CD8-positive, alpha-beta T cell (primary cell): ENCODE measurements at regions of chr10 and their contacts with region 1.

Region 1: DNA sequence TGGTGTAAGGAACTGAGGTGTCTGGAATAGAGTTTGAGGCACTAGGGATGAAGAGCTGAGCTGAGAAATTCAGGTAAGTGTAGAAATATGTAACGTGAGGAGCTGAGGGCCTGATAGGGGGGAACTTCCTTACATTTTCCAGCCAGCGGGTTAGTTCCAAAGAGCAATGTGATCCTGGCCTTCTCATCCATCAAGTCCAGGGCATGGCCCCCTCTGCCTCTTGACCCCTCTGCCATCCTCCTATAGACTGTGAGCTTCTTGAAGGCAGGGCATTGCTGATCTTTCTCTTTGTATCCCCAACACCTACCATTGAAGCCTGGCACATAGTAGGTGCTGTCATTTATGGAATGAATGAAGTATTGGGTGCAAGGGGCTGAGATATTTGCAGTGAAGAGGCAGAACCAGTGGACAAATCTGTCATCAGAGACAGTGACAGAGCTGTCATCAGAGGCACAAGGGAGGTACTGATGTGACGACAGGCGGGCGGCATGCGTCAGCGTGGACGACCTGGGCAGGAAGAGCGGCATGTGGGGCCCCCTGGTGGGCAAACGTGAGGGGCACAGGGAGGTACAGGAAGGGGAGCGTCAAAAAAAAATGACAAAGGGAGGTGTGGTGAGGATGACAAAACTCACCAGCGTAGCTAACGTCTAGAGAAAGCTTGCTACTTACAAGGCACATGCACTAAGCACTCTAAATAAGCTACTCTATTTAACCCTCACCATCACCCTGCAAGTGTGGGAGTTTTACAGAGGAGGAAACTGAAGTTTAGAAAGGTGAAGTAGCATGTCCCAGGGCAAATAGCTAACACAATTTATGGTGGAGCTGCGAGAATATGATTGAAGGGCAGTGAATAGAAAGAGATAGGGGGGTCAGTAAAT is 5.2 kb upstream of the CAMK2G start:
- DNase-seq: peak; percentile 86 to 98 (median 95)
- ATAC-seq: peak; percentile 85
- H3K4me3 ChIP-seq: no peak overlapping the region
- H3K4me3 Mint-ChIP-seq: no peak overlapping the region
- H3K27ac ChIP-seq: peak overlapping the region; percentile 19 to 29
- H3K27ac Mint-ChIP-seq: peak overlapping the region; percentile 90
- H3K4me1 ChIP-seq: peaks cover 31% of the 10 kb centered on the region
- H3K4me1 Mint-ChIP-seq: peaks cover 42% of the 10 kb centered on the region
- H3K27me3 ChIP-seq: no peaks in the 10 kb centered on the region
- H3K27me3 Mint-ChIP-seq: no peaks in the 10 kb centered on the region
- CTCF ChIP-seq: peak; percentile 85

Region 2: DNA sequence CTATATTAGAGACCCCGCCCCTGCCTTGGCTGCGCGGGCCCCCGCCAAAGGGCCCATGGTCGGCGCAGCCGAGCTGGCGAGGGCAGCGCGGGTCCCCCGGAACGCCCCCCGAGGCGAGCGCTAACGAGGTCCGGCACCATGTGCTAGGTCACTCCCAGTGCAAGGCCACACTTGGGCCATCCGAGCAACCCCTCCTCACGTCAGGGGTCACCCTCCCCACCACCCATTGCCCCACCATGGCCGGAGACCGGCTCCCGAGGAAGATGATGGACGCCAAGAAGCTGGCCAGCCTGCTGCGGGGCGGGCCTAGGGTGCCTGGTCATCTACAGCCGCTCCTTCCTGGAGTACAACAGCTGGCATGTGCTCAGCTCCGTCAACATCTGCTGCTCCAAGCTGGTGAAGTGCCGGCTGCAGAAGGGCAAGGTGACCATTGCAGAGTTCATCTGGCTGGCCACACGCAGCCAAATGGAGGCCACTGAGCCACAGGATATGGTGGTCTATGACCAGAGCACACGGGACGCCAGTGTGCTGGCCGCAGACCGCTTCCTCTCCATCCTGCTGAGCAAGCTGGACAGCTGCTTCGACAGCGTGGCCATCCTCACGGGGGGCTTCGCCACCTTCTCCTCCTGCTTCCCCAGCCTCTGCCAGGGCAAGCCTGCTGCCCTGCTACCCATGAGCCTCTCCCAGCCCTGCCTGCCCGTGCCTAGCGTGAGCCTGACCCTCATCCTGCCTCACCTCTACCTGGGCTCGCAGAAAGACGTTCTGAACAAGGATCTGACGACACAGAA is 147.8 kb before region 1 on chr10:
- CTCF ChIA-PET with region 1: no interaction called
- POLR2A ChIA-PET with region 1: no interaction called
- intact Hi-C with region 1: no loop called
- DNase-seq: no peak
- ATAC-seq: no peak
- H3K4me3 ChIP-seq: no peak overlapping the region
- H3K4me3 Mint-ChIP-seq: peak overlapping the region; percentile 58
- H3K27ac ChIP-seq: no peak overlapping the region
- H3K27ac Mint-ChIP-seq: no peak overlapping the region
- H3K4me1 ChIP-seq: peaks cover 13% of the 10 kb centered on the region
- H3K4me1 Mint-ChIP-seq: peaks cover 30% of the 10 kb centered on the region
- H3K27me3 ChIP-seq: no peaks in the 10 kb centered on the region
- H3K27me3 Mint-ChIP-seq: no peaks in the 10 kb centered on the region
- CTCF ChIP-seq: no peak

Region 3: GRCh38 chr10:73772280-73773151 is 107.0 kb before region 1 on chr10:
- CTCF ChIA-PET with region 1: interaction called, 12 read pairs
- POLR2A ChIA-PET with region 1: interaction called, 4 read pairs
- intact Hi-C with region 1: loop called (anchors 1 to 5 kb)
- DNase-seq: peak; percentile 52 to 95 (median 78)
- ATAC-seq: peak; percentile 66
- H3K4me3 ChIP-seq: peak overlapping the region; percentile 92 to 96
- H3K4me3 Mint-ChIP-seq: peak overlapping the region; percentile 96
- H3K27ac ChIP-seq: peak overlapping the region; percentile 86 to 94
- H3K27ac Mint-ChIP-seq: peak overlapping the region; percentile 96
- H3K4me1 ChIP-seq: peaks cover 37% of the 10 kb centered on the region
- H3K4me1 Mint-ChIP-seq: peaks cover 59% of the 10 kb centered on the region
- H3K27me3 ChIP-seq: no peaks in the 10 kb centered on the region
- H3K27me3 Mint-ChIP-seq: no peaks in the 10 kb centered on the region
- CTCF ChIP-seq: no peak

Region 4: DNA sequence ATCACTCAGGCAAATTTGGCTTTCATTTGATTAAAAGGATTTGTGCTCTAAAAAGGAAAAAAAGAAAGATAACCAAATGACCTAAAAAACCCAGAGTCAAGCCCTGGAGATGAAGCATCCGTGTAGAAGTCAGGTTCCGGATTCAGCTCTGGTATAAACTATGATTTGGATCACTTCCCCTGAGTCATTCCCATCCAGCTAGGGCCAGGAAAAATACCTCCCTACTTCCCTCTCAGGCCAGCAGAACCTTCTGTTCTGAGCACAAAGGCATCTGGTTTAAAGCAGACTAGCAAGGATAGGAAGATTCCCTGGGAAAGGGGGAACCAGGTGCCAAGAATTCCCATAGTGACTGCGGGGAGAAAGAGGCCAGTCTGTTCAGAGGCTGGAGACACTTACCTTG is 42.5 kb before region 1 on chr10:
- CTCF ChIA-PET with region 1: interaction called, 13 read pairs
- POLR2A ChIA-PET with region 1: interaction called, 3 read pairs
- intact Hi-C with region 1: no loop called
- DNase-seq: no peak
- ATAC-seq: no peak
- H3K4me3 ChIP-seq: no peak overlapping the region
- H3K4me3 Mint-ChIP-seq: no peak overlapping the region
- H3K27ac ChIP-seq: no peak overlapping the region
- H3K27ac Mint-ChIP-seq: no peak overlapping the region
- H3K4me1 ChIP-seq: no peaks in the 10 kb centered on the region
- H3K4me1 Mint-ChIP-seq: peaks cover 2% of the 10 kb centered on the region
- H3K27me3 ChIP-seq: no peaks in the 10 kb centered on the region
- H3K27me3 Mint-ChIP-seq: no peaks in the 10 kb centered on the region
- CTCF ChIP-seq: no peak

Region 5: DNA sequence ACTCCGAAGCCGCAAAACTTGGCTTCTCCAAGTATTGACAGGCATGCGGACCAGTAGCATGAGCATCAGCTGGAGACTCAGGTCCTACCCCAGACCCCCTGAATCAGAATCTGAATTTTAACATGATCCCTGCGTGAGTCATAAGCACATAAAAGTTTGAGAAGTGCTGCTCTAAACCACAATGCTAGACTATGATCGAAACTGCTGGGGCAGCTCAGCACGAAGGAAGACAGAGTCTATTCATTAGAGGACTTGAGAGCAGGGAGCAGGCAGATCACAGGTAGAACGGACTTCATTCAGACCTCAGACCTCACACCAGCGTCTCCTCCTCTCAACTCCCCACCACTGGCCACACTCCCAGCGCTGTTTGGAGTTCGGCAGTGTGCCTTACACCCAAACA is 22.1 kb before region 1 on chr10:
- CTCF ChIA-PET with region 1: interaction called, 528 read pairs
- POLR2A ChIA-PET with region 1: interaction called, 19 read pairs
- intact Hi-C with region 1: no loop called
- DNase-seq: peak in 4 of 9 experiments; percentile 31 to 60 (median 48)
- ATAC-seq: peak; percentile 53
- H3K4me3 ChIP-seq: no peak overlapping the region
- H3K4me3 Mint-ChIP-seq: peak overlapping the region; percentile 50
- H3K27ac ChIP-seq: no peak overlapping the region
- H3K27ac Mint-ChIP-seq: peak overlapping the region; percentile 81
- H3K4me1 ChIP-seq: peaks cover 62% of the 10 kb centered on the region
- H3K4me1 Mint-ChIP-seq: peaks cover 60% of the 10 kb centered on the region
- H3K27me3 ChIP-seq: no peaks in the 10 kb centered on the region
- H3K27me3 Mint-ChIP-seq: no peaks in the 10 kb centered on the region
- CTCF ChIP-seq: no peak

Region 6: DNA sequence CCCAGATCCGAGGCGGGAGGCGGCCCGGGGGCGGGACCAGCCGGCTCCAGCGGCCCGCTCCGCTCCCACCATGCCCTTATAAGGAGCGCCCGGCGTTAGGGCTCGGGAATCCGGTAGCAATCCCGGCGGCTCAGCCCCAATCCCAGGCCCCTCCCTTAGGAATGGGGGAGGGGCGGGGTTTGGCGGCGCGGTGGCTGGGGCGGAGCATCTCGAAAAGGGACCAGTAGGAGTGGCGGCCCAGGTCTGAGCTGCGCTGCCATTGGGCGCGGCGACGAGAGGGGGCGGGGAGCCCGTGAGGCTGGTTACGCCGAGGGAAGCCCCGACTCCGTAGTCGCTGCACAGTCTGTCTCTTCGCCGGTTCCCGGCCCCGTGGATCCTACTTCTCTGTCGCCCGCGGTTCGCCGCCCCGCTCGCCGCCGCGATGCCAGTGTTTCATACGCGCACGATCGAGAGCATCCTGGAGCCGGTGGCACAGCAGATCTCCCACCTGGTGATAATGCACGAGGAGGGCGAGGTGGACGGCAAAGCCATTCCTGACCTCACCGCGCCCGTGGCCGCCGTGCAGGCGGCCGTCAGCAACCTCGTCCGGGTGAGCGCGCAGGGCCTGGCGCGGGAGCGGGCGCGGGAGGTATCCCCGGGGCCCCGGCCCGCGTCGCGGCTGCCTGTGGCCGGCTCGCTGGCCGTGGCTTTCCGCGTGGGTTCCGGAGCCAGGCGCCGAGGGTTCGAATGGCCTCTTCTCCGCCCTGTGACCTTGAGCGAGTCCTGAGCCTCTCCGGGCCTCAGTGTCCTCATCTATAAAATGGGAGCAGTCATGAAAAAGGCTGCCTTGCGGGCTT is 118.5 kb after region 1 on chr10 and contains the start of gene VCL:
- CTCF ChIA-PET with region 1: interaction called, 6 read pairs
- POLR2A ChIA-PET with region 1: interaction called, 3 read pairs
- intact Hi-C with region 1: loop called (anchors 2 kb)
- DNase-seq: peak; percentile 91 to 97 (median 95)
- ATAC-seq: peak; percentile 96
- H3K4me3 ChIP-seq: peak within 1 kb of the TSS; percentile 82
- H3K4me3 Mint-ChIP-seq: peak within 1 kb of the TSS; percentile 100
- H3K27ac ChIP-seq: peak within 1 kb of the TSS; percentile 63
- H3K27ac Mint-ChIP-seq: peak within 1 kb of the TSS; percentile 96
- H3K4me1 ChIP-seq: peaks cover 32% of the 10 kb centered on the region
- H3K4me1 Mint-ChIP-seq: peaks cover 45% of the 10 kb centered on the region
- H3K27me3 ChIP-seq: no peaks in the 10 kb centered on the region
- H3K27me3 Mint-ChIP-seq: no peaks in the 10 kb centered on the region
- CTCF ChIP-seq: no peak
- total RNA-seq, gene VCL: 6.6 to 9.4 TPM

Region 7: GRCh38 chr10:74500026-74500704 is 620.6 kb after region 1 on chr10:
- CTCF ChIA-PET with region 1: no interaction called
- POLR2A ChIA-PET with region 1: no interaction called
- intact Hi-C with region 1: no loop called
- DNase-seq: no peak
- ATAC-seq: no peak
- H3K4me3 ChIP-seq: no peak overlapping the region
- H3K4me3 Mint-ChIP-seq: no peak overlapping the region
- H3K27ac ChIP-seq: no peak overlapping the region
- H3K27ac Mint-ChIP-seq: no peak overlapping the region
- H3K4me1 ChIP-seq: no peaks in the 10 kb centered on the region
- H3K4me1 Mint-ChIP-seq: peaks cover 5% of the 10 kb centered on the region
- H3K27me3 ChIP-seq: no peaks in the 10 kb centered on the region
- H3K27me3 Mint-ChIP-seq: no peaks in the 10 kb centered on the region
- CTCF ChIP-seq: no peak

Region 8: GRCh38 chr10:74826142-74827044 is 946.9 kb after region 1 on chr10 and contains the start of gene KAT6B:
- CTCF ChIA-PET with region 1: no interaction called
- POLR2A ChIA-PET with region 1: no interaction called
- intact Hi-C with region 1: loop called (anchors 2 to 10 kb)
- DNase-seq: peak; percentile 99 to 100 (median 100)
- ATAC-seq: peak; percentile 76
- H3K4me3 ChIP-seq: peak within 1 kb of the TSS; percentile 84 to 95
- H3K4me3 Mint-ChIP-seq: peak within 1 kb of the TSS; percentile 92
- H3K27ac ChIP-seq: peak within 1 kb of the TSS; percentile 84 to 89
- H3K27ac Mint-ChIP-seq: peak within 1 kb of the TSS; percentile 97
- H3K4me1 ChIP-seq: peaks cover 40% of the 10 kb centered on the region
- H3K4me1 Mint-ChIP-seq: peaks cover 69% of the 10 kb centered on the region
- H3K27me3 ChIP-seq: no peaks in the 10 kb centered on the region
- H3K27me3 Mint-ChIP-seq: no peaks in the 10 kb centered on the region
- CTCF ChIP-seq: no peak
- total RNA-seq, gene KAT6B: 73.0 to 74.7 TPM